ENCODE measurements at regions of chr11 and their contacts with region 1.

Region 1: GRCh38 chr11:44574610-44575287 is 9.3 kb downstream of the CD82 start:
- DNase-seq: peak; percentile 43
- H3K4me3 Mint-ChIP-seq: peak overlapping the region; percentile 70
- H3K27ac Mint-ChIP-seq: peak overlapping the region; percentile 98
- H3K4me1 Mint-ChIP-seq: peaks cover 89% of the 10 kb centered on the region
- H3K27me3 Mint-ChIP-seq: no peaks in the 10 kb centered on the region

Region 2: GRCh38 chr11:44530413-44531115 is 44.2 kb before region 1 on chr11:
- intact Hi-C with region 1: loop called (anchors 2 kb)
- DNase-seq: peak; percentile 46
- H3K4me3 Mint-ChIP-seq: peak overlapping the region; percentile 63
- H3K27ac Mint-ChIP-seq: peak overlapping the region; percentile 97
- H3K4me1 Mint-ChIP-seq: peaks cover 33% of the 10 kb centered on the region
- H3K27me3 Mint-ChIP-seq: no peaks in the 10 kb centered on the region

Region 3: DNA sequence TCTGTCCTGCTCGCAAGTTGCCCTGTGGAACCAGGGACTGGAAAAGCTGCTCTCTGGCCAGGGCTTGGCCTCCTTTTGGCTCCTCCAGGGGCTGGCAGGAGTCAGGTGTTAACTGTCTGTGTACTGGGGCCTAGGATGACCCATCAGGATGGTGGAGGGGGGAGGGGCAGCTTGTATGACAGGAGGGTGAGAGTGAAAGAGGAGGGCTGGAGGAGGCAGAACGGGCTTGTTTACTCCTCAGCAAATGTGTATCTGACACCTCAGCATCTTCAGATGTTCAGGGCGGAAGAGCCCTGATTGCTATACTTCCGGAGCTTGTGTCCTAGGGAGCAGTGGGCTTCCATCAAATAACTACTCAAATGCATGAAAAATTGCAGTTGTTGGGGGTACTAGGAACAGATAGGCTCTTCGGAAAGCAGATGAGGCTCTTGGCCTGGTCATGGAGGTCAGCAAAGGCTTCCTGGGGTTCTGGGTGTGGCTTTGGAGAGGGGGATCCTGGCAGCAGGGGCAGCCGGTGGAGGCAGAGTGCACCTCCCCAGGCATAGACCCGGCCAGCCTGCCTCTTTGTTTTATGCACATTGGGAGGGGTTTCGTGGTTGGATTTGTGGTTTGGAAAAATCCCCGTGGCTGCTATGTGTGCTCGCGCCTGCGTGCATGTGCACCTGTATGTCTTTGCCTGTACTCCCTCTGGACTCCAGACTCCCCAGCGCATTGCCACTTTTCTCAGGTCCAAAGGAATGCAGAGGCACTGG is 22.0 kb after region 1 on chr11:
- intact Hi-C with region 1: loop called (anchors 1 kb)
- DNase-seq: peak; percentile 78
- H3K4me3 Mint-ChIP-seq: peak overlapping the region; percentile 71
- H3K27ac Mint-ChIP-seq: peak overlapping the region; percentile 97
- H3K4me1 Mint-ChIP-seq: peaks cover 62% of the 10 kb centered on the region
- H3K27me3 Mint-ChIP-seq: no peaks in the 10 kb centered on the region